ENCODE measurements at regions of chr12 and their contacts with region 1.

Region 1: GRCh38 chr12:50111693-50112455 is at the start of gene COX14:
- DNase-seq: peak; percentile 99
- ATAC-seq: peak; percentile 88
- H3K4me3 Mint-ChIP-seq: peak within 1 kb of the TSS; percentile 99
- H3K27ac Mint-ChIP-seq: peak within 1 kb of the TSS; percentile 99
- H3K4me1 Mint-ChIP-seq: peaks cover 19% of the 10 kb centered on the region
- H3K27me3 Mint-ChIP-seq: no peaks in the 10 kb centered on the region
- CTCF ChIP-seq: peak; percentile 70
- total RNA-seq, gene COX14: 34.0 to 41.4 TPM (median 40.4 TPM) in 3 replicates

Region 2: GRCh38 chr12:49687941-49688340 is 423.9 kb before region 1 on chr12:
- CTCF ChIA-PET with region 1: no interaction called
- POLR2A ChIA-PET with region 1: no interaction called
- DNase-seq: peak; percentile 36
- ATAC-seq: peak; percentile 97
- H3K4me3 Mint-ChIP-seq: no peak overlapping the region
- H3K27ac Mint-ChIP-seq: no peak overlapping the region
- H3K4me1 Mint-ChIP-seq: peaks cover 21% of the 10 kb centered on the region
- H3K27me3 Mint-ChIP-seq: no peaks in the 10 kb centered on the region
- CTCF ChIP-seq: no peak

Region 3: DNA sequence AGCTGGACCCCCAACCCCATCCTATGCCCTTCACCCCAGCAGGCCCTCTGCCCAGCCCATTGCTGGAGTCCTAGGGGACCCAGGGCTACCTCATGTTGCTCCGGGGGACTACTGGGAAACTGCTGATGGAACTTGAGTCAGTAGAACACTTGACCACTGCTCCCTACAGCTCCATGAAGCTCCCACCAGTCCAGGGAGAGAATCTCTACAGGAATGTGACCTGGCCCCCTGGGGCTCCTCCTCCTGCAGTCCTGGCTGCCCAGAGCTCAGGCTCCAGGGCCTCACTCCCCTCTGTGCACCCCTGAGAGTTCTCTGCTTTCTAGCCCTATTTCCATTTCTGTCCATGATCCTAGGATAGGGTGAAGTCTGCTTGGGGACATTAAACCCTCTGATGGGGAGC is 172.2 kb before region 1 on chr12:
- CTCF ChIA-PET with region 1: no interaction called
- POLR2A ChIA-PET with region 1: no interaction called
- DNase-seq: no peak
- ATAC-seq: no peak
- H3K4me3 Mint-ChIP-seq: no peak overlapping the region
- H3K27ac Mint-ChIP-seq: no peak overlapping the region
- H3K4me1 Mint-ChIP-seq: peaks cover 16% of the 10 kb centered on the region
- H3K27me3 Mint-ChIP-seq: no peaks in the 10 kb centered on the region; the same call in 1 of the 2 replicates
- CTCF ChIP-seq: no peak

Region 4: GRCh38 chr12:50055831-50056638 is 55.8 kb before region 1 on chr12:
- CTCF ChIA-PET with region 1: interaction called, 18 read pairs
- POLR2A ChIA-PET with region 1: no interaction called
- DNase-seq: peak; percentile 72
- ATAC-seq: peak; percentile 46
- H3K4me3 Mint-ChIP-seq: peak overlapping the region; percentile 79
- H3K27ac Mint-ChIP-seq: no peak overlapping the region
- H3K4me1 Mint-ChIP-seq: peaks cover 25% of the 10 kb centered on the region
- H3K27me3 Mint-ChIP-seq: peaks cover 95% of the 10 kb centered on the region
- CTCF ChIP-seq: peak; percentile 94

Region 5: GRCh38 chr12:50129290-50129689 is 17.4 kb after region 1 on chr12:
- CTCF ChIA-PET with region 1: interaction called, 21 read pairs
- POLR2A ChIA-PET with region 1: no interaction called
- DNase-seq: no peak
- ATAC-seq: no peak
- H3K4me3 Mint-ChIP-seq: no peak overlapping the region
- H3K27ac Mint-ChIP-seq: no peak overlapping the region
- H3K4me1 Mint-ChIP-seq: no peaks in the 10 kb centered on the region
- H3K27me3 Mint-ChIP-seq: no peaks in the 10 kb centered on the region
- CTCF ChIP-seq: no peak

Region 6: DNA sequence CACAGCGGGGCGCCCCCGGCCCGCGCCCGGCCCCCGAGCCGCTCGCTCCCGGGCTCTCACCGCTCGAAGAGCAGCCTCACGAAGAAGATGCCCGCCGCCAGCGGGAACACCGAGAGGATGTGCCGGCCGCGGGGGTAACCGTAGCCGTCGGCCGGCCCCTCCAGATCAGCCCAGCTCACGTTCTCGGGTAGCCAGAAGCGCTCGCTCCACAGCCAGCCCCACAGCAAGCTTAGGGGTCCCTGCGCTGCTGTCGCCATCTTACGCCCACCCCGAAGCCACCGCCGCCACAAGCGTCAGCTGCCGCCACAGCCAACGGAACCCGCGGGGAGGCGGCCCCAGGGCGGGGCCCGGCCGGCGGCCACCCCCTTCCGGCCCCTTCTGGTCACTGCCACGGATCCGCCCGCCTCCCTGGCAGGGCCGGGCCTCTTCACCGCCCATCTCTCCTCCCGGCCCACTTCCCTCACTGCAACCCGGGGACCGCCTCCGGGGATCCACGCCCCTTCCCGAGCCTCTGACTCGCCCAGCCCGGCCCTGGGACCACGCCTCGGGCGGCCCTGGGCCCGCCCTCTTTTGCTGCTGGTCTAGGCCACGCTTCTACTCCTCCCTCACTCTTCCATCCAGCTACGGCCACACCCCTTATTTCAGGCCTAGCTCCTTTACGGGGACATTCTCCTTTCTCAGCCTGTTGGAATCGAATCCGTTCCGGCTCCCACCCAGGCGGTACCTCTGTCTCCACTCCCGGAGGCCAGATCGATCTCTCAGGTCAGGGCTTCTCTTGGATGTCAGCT is 55.4 kb after region 1 on chr12 and contains the start of gene CERS5:
- CTCF ChIA-PET with region 1: interaction called, 111 read pairs
- POLR2A ChIA-PET with region 1: interaction called, 50 read pairs
- DNase-seq: peak; percentile 99
- ATAC-seq: peak; percentile 95
- H3K4me3 Mint-ChIP-seq: peak within 1 kb of the TSS; percentile 87
- H3K27ac Mint-ChIP-seq: peak within 1 kb of the TSS; percentile 100
- H3K4me1 Mint-ChIP-seq: peaks cover 30% of the 10 kb centered on the region
- H3K27me3 Mint-ChIP-seq: no peaks in the 10 kb centered on the region
- CTCF ChIP-seq: 0 out of 2 replicates have a peak, but pooled peaks have one; percentile 23
- total RNA-seq, gene CERS5: 47.8 to 55.8 TPM (median 51.7 TPM) in 3 replicates

Region 7: GRCh38 chr12:50283229-50283923 is 171.5 kb after region 1 on chr12 and contains the start of gene LIMA1:
- CTCF ChIA-PET with region 1: interaction called, 7 read pairs
- POLR2A ChIA-PET with region 1: interaction called, 14 read pairs
- DNase-seq: peak; percentile 96
- ATAC-seq: peak; percentile 99
- H3K4me3 Mint-ChIP-seq: peak within 1 kb of the TSS; percentile 70
- H3K27ac Mint-ChIP-seq: peak within 1 kb of the TSS; percentile 92
- H3K4me1 Mint-ChIP-seq: peaks cover 11% of the 10 kb centered on the region
- H3K27me3 Mint-ChIP-seq: peaks cover 8% of the 10 kb centered on the region
- CTCF ChIP-seq: no peak
- total RNA-seq, gene LIMA1: 30.8 to 41.2 TPM (median 31.2 TPM) in 3 replicates